ENCODE measurements at regions of chr7 and their contacts with region 1.

Region 1: GRCh38 chr7:23013715-23014649 is at the start of gene HYCC1:
- DNase-seq: peak; percentile 96 to 100 (median 99)
- ATAC-seq: peak; percentile 99
- H3K4me3 ChIP-seq: peak within 1 kb of the TSS; percentile 82
- H3K4me3 Mint-ChIP-seq: peak within 1 kb of the TSS; percentile 8 to 98 (median 96)
- H3K27ac ChIP-seq: peak within 1 kb of the TSS; percentile 67
- H3K27ac Mint-ChIP-seq: peak within 1 kb of the TSS; percentile 60 to 96 (median 88)
- H3K4me1 ChIP-seq: peaks cover 5 to 15% of the 10 kb centered on the region in 2 donors
- H3K4me1 Mint-ChIP-seq: peaks cover 8 to 35% (median 27%) of the 10 kb centered on the region in 7 donors
- H3K27me3 ChIP-seq: no peaks in the 10 kb centered on the region
- H3K27me3 Mint-ChIP-seq: peaks cover 0 to 3% (median 0%) of the 10 kb centered on the region in 5 donors
- total RNA-seq, gene HYCC1: 14.2 to 67.0 (median 18.3) TPM

Region 2: GRCh38 chr7:22193450-22193983 is 820.5 kb before region 1 on chr7:
- CTCF ChIA-PET with region 1: no interaction called
- POLR2A ChIA-PET with region 1: no interaction called
- intact Hi-C with region 1: no loop called
- DNase-seq: no peak
- ATAC-seq: no peak
- H3K4me3 ChIP-seq: no peak overlapping the region
- H3K4me3 Mint-ChIP-seq: no peak overlapping the region
- H3K27ac ChIP-seq: no peak overlapping the region
- H3K27ac Mint-ChIP-seq: no peak overlapping the region
- H3K4me1 ChIP-seq: no peaks in the 10 kb centered on the region
- H3K4me1 Mint-ChIP-seq: no peaks in the 10 kb centered on the region
- H3K27me3 ChIP-seq: no peaks in the 10 kb centered on the region
- H3K27me3 Mint-ChIP-seq: peaks cover 0 to 11% (median 5%) of the 10 kb centered on the region in 5 donors

Region 3: DNA sequence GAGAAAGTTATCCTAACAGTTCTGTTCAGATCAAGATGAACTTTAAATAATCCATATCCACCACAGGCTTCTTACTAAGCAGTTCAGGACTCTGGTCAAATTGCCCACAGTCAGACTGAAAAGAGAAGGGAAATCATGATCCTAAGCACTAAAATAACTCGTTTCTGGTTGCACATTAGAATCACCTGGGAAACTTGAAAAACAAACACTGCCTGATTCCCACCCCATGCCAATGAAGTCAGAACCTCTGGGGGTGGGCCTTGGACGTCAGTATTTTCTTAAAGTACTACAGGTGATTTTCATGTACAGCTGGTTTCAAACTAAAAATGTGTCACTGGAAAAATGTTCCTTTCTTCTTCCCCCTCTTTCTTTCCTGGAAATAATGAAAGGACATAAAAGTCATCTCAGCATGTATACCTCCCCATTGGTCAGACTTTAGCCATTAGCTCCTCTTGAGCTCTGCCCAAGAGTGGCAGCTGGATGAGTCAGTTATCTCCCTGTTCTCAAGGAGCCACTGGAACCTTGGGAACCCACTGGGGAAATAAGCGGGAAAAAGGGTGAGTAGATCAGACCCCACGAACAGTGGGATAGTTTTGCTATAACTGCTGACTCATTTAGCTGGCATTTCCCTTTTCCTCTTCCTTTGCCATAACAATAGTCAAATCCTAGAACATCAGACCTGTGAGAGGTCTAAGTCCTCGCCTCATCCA is 362.3 kb before region 1 on chr7:
- CTCF ChIA-PET with region 1: no interaction called
- POLR2A ChIA-PET with region 1: no interaction called
- intact Hi-C with region 1: no loop called
- DNase-seq: no peak
- ATAC-seq: no peak
- H3K4me3 ChIP-seq: no peak overlapping the region
- H3K4me3 Mint-ChIP-seq: no peak overlapping the region
- H3K27ac ChIP-seq: no peak overlapping the region
- H3K27ac Mint-ChIP-seq: no peak overlapping the region
- H3K4me1 ChIP-seq: no peaks in the 10 kb centered on the region
- H3K4me1 Mint-ChIP-seq: peaks cover 0 to 4% (median 0%) of the 10 kb centered on the region in 7 donors
- H3K27me3 ChIP-seq: no peaks in the 10 kb centered on the region
- H3K27me3 Mint-ChIP-seq: peaks cover 0 to 24% (median 5%) of the 10 kb centered on the region in 5 donors

Region 4: GRCh38 chr7:22672846-22673652 is 340.9 kb before region 1 on chr7:
- CTCF ChIA-PET with region 1: no interaction called
- POLR2A ChIA-PET with region 1: interaction called, 3 read pairs
- intact Hi-C with region 1: loop called in 1 of 2 experiments (anchors 5 kb)
- DNase-seq: no peak
- ATAC-seq: no peak
- H3K4me3 ChIP-seq: no peak overlapping the region
- H3K4me3 Mint-ChIP-seq: peak overlapping the region in 7 of 10 donors; percentile 7 to 68 (median 37)
- H3K27ac ChIP-seq: no peak overlapping the region
- H3K27ac Mint-ChIP-seq: peak overlapping the region; percentile 14 to 88 (median 78)
- H3K4me1 ChIP-seq: peaks cover 18 to 54% of the 10 kb centered on the region in 2 donors
- H3K4me1 Mint-ChIP-seq: peaks cover 43 to 68% (median 65%) of the 10 kb centered on the region in 7 donors
- H3K27me3 ChIP-seq: no peaks in the 10 kb centered on the region
- H3K27me3 Mint-ChIP-seq: peaks cover 0 to 13% (median 0%) of the 10 kb centered on the region in 5 donors

Region 5: DNA sequence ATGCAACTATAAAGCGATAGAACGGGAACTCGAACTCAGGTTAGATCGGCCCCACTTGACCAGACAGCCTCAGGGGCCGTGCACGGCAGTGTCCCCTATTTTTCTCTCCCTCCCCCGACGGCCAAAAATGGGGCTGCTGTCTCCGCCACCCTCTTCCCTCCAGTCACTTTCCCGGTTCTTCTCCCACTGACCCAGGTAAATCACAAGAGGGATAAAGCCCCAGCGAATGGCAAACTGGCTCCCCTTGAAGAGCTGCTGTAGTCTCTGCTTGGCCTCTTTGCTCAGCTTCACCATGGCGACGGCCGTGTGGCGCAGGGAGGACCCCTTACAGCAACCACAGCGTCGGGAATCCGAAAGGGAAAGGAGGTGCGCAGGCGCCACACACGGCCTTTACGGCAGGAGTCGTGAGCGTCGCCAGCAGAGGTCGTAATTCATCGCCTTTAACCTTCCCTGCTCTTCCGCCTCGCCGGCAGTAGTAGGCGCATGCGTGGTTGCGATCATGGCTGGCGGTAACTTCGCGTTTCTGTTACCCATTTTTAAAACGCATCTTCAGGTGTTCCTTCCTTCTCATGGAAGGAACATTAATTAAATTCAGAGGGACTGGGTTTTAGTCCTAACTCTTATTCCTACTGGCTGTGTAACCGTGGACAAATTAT is 191.4 kb before region 1 on chr7 and contains the start of gene TOMM7:
- CTCF ChIA-PET with region 1: no interaction called
- POLR2A ChIA-PET with region 1: interaction called, 4 read pairs
- intact Hi-C with region 1: loop called (anchors 1 kb)
- DNase-seq: peak; percentile 68 to 92 (median 90)
- ATAC-seq: peak; percentile 99
- H3K4me3 ChIP-seq: peak within 1 kb of the TSS; percentile 83
- H3K4me3 Mint-ChIP-seq: peak within 1 kb of the TSS; percentile 93 to 100 (median 99)
- H3K27ac ChIP-seq: peak within 1 kb of the TSS; percentile 94
- H3K27ac Mint-ChIP-seq: peak within 1 kb of the TSS; percentile 94 to 100 (median 99)
- H3K4me1 ChIP-seq: peaks cover 6 to 19% of the 10 kb centered on the region in 2 donors
- H3K4me1 Mint-ChIP-seq: peaks cover 15 to 53% (median 43%) of the 10 kb centered on the region in 7 donors
- H3K27me3 ChIP-seq: peaks cover 0 to 4% of the 10 kb centered on the region in 2 donors
- H3K27me3 Mint-ChIP-seq: peaks cover 15 to 36% (median 19%) of the 10 kb centered on the region in 5 donors
- total RNA-seq, gene TOMM7: 302 to 737 (median 649) TPM

Region 6: DNA sequence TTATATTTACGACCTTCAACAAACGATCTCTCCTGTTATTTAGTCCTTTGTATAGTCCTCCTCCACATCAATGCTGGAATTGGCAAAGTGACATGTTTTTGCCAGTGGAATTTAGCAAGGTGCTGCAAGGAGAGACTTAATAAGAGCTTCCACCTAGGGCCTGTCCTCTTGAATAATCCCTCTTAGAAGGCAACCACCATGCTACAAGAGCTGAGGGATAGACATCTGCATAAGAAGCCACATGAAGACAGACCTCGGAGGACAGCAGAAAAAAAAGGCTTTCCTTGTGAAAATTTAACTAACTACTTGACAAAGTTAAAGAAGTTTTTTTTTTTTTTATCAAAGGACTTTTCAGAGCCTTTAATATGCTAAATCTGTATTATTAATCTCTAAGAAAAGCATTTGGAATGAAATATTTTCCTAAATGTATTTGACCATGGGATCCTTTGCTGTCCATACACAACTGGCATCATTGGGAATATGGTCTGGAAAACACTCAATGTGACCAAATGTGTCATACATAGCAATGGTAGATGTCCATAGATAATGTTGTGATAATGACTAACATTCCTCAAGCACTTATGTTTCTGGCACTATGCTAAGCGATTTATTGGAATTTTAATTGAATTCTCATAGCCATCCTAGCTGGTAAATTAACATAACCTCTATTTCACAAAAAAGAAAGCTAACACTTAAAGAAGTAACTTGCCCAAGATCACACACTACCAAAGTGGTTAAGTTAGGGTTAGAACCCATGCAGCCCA is 13.2 kb before region 1 on chr7:
- CTCF ChIA-PET with region 1: no interaction called
- POLR2A ChIA-PET with region 1: interaction called, 5 read pairs
- intact Hi-C with region 1: loop called (anchors 1 kb)
- DNase-seq: no peak
- ATAC-seq: no peak
- H3K4me3 ChIP-seq: no peak overlapping the region
- H3K4me3 Mint-ChIP-seq: peak overlapping the region in 1 of 10 donors; percentile 63
- H3K27ac ChIP-seq: no peak overlapping the region
- H3K27ac Mint-ChIP-seq: no peak overlapping the region
- H3K4me1 ChIP-seq: no peaks in the 10 kb centered on the region
- H3K4me1 Mint-ChIP-seq: peaks cover 10 to 47% (median 20%) of the 10 kb centered on the region in 7 donors
- H3K27me3 ChIP-seq: no peaks in the 10 kb centered on the region
- H3K27me3 Mint-ChIP-seq: no peaks in the 10 kb centered on the region

Region 7: GRCh38 chr7:23181684-23182553 is 167.9 kb after region 1 on chr7 and contains the start of gene NUP42:
- CTCF ChIA-PET with region 1: no interaction called
- POLR2A ChIA-PET with region 1: no interaction called
- intact Hi-C with region 1: loop called (anchors 1 kb)
- DNase-seq: peak; percentile 87 to 95 (median 93)
- ATAC-seq: peak; percentile 97
- H3K4me3 ChIP-seq: peak within 1 kb of the TSS; percentile 86
- H3K4me3 Mint-ChIP-seq: peak within 1 kb of the TSS; percentile 95 to 100 (median 98)
- H3K27ac ChIP-seq: peak within 1 kb of the TSS; percentile 85
- H3K27ac Mint-ChIP-seq: peak within 1 kb of the TSS; percentile 97 to 99 (median 98)
- H3K4me1 ChIP-seq: peaks cover 16 to 17% of the 10 kb centered on the region in 2 donors
- H3K4me1 Mint-ChIP-seq: peaks cover 20 to 50% (median 43%) of the 10 kb centered on the region in 7 donors
- H3K27me3 ChIP-seq: no peaks in the 10 kb centered on the region
- H3K27me3 Mint-ChIP-seq: peaks cover 0 to 16% (median 0%) of the 10 kb centered on the region in 5 donors
- total RNA-seq, gene NUP42: 19.8 to 37.7 (median 27.5) TPM

Region 8: GRCh38 chr7:23196306-23196705 is 182.3 kb after region 1 on chr7:
- CTCF ChIA-PET with region 1: no interaction called
- POLR2A ChIA-PET with region 1: no interaction called
- intact Hi-C with region 1: no loop called
- DNase-seq: no peak
- ATAC-seq: no peak
- H3K4me3 ChIP-seq: no peak overlapping the region
- H3K4me3 Mint-ChIP-seq: no peak overlapping the region
- H3K27ac ChIP-seq: no peak overlapping the region
- H3K27ac Mint-ChIP-seq: no peak overlapping the region
- H3K4me1 ChIP-seq: no peaks in the 10 kb centered on the region
- H3K4me1 Mint-ChIP-seq: no peaks in the 10 kb centered on the region
- H3K27me3 ChIP-seq: no peaks in the 10 kb centered on the region
- H3K27me3 Mint-ChIP-seq: no peaks in the 10 kb centered on the region

Region 9: DNA sequence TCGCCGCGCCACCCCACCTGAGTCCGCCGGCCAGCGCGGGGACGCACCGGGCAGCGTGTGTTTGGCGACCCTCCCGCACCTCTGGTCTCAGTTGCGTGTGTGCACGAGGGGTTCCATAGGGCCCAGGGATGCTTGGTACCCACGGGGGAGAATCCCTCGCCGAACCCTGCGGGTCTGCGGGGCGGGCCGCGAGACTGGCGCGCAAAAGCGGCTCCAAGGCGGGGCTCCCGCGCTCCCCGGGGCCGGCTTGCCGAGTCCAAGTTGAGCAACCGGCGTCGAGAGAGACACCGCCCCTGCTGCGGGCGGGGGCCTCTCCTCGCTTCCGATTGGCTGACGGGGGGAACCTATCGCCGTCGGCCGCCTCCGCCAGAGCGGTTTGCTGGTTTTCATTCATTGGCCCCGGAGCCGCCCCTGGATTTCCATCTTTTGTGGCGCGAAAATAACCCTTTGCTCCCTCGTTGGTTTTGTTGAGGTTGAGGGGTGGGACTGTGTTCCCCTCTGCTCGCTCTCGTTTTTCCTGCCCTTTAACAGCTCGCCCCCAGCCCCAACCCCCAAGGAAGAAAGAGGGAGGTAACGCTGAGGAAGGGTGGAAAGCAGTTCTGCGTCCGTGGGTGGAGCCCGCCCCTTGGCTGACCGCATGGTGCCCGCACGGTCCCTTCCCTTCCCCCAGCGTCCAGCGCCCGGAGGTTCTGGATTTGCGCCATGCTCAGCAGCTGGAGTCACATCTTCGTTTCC is 460.3 kb after region 1 on chr7:
- CTCF ChIA-PET with region 1: no interaction called
- POLR2A ChIA-PET with region 1: no interaction called
- intact Hi-C with region 1: loop called (anchors 10 kb)
- DNase-seq: peak in 6 of 9 donors; percentile 13 to 90 (median 26)
- ATAC-seq: peak; percentile 80
- H3K4me3 ChIP-seq: no peak overlapping the region
- H3K4me3 Mint-ChIP-seq: peak overlapping the region; percentile 13 to 85 (median 54)
- H3K27ac ChIP-seq: no peak overlapping the region
- H3K27ac Mint-ChIP-seq: peak overlapping the region in 5 of 9 donors; percentile 21 to 70 (median 69)
- H3K4me1 ChIP-seq: peaks cover 12 to 22% of the 10 kb centered on the region in 2 donors
- H3K4me1 Mint-ChIP-seq: peaks cover 17 to 35% (median 29%) of the 10 kb centered on the region in 7 donors
- H3K27me3 ChIP-seq: peaks cover 78 to 85% of the 10 kb centered on the region in 2 donors
- H3K27me3 Mint-ChIP-seq: peaks cover 67 to 75% (median 70%) of the 10 kb centered on the region in 5 donors

Region 10: DNA sequence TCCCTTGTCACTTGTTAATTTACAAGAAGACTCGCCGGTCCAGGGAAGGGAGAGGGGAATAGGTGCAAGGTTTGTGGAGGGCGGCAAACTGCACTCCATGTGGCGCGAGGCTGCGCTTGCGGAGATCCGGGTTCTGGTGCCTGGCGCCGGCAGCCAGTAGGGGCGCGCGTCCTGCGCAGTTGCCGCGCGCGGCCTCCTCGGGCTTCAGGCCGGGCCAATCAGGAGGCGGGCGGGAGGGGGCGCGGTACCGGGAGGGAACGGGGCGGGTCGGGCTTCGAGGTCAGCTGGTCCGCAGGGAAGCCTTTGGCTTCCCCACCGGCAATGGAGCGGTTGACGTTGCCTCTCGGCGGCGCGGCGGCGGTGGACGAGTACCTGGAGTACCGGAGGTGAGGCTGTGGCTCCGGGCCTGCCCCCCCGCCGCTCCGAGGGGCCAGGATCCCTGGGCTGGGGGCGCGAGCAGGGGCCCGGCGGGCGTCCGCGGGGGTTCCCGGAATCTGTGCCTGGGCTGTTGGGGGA is 666.0 kb after region 1 on chr7 and contains the start of gene FAM221A:
- CTCF ChIA-PET with region 1: no interaction called
- POLR2A ChIA-PET with region 1: no interaction called
- intact Hi-C with region 1: loop called in 1 of 2 experiments (anchors 5 kb)
- DNase-seq: peak; percentile 52 to 80 (median 72)
- ATAC-seq: peak; percentile 99
- H3K4me3 ChIP-seq: peak within 1 kb of the TSS; percentile 95
- H3K4me3 Mint-ChIP-seq: peak within 1 kb of the TSS; percentile 89 to 98 (median 94)
- H3K27ac ChIP-seq: peak within 1 kb of the TSS; percentile 65
- H3K27ac Mint-ChIP-seq: peak within 1 kb of the TSS; percentile 45 to 90 (median 86)
- H3K4me1 ChIP-seq: no peaks in the 10 kb centered on the region
- H3K4me1 Mint-ChIP-seq: peaks cover 0 to 32% (median 13%) of the 10 kb centered on the region in 7 donors
- H3K27me3 ChIP-seq: no peaks in the 10 kb centered on the region
- H3K27me3 Mint-ChIP-seq: peaks cover 0 to 21% (median 3%) of the 10 kb centered on the region in 5 donors
- total RNA-seq, gene FAM221A: 4.0 to 8.1 (median 5.3) TPM

Measured in naive thymus-derived CD4-positive, alpha-beta T cell (primary cell).